ENCODE measurements at regions of chr16 and their contacts with region 1.

Region 1: GRCh38 chr16:3188925-3189825 is 1.2 kb downstream of the OR1F1 start:
- DNase-seq: peak; percentile 59 to 60
- H3K4me3 ChIP-seq: peak overlapping the region; percentile 94
- H3K27ac ChIP-seq: 0 out of 2 replicates have a peak overlapping the region, but pooled peaks have one; percentile 33
- H3K4me1 ChIP-seq: 0 out of 2 replicates have a peak, but pooled peaks cover 5% of the 10 kb centered on the region
- H3K27me3 ChIP-seq: no peaks in the 10 kb centered on the region
- CTCF ChIP-seq: no peak

Region 2: DNA sequence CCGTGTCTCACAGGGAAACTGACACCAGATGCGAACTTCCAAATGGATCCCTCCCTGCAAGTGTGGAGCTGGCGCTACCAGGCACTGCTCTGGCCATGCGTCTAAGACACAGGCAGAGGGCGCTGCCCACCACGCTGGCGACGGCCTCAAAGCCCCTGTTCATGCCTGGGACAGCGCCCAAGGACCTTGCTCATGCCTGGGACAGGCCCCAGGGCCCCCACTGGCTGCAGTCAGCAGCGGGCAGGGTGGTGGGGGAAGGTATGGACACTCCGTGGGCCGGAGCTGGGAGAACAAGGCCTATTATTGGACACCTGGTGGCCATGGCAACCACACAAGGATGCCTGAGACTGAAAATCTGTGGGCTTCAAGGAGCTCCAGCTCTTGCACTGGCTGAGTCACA is 350.2 kb before region 1 on chr16:
- CTCF ChIA-PET with region 1: no interaction called
- POLR2A ChIA-PET with region 1: no interaction called
- intact Hi-C with region 1: no loop called
- DNase-seq: no peak
- H3K4me3 ChIP-seq: no peak overlapping the region
- H3K27ac ChIP-seq: no peak overlapping the region
- H3K4me1 ChIP-seq: peaks cover 32% of the 10 kb centered on the region
- H3K27me3 ChIP-seq: no peaks in the 10 kb centered on the region
- CTCF ChIP-seq: 0 out of 2 replicates have a peak, but pooled peaks have one; percentile 52

Region 3: GRCh38 chr16:3150346-3151218 is 38.6 kb before region 1 on chr16:
- CTCF ChIA-PET with region 1: no interaction called
- POLR2A ChIA-PET with region 1: interaction called, 8 read pairs
- intact Hi-C with region 1: loop called (anchors 1 kb)
- DNase-seq: peak; percentile 91 to 99
- H3K4me3 ChIP-seq: peak overlapping the region; percentile 99
- H3K27ac ChIP-seq: peak overlapping the region; percentile 75
- H3K4me1 ChIP-seq: peaks cover 6% of the 10 kb centered on the region
- H3K27me3 ChIP-seq: no peaks in the 10 kb centered on the region
- CTCF ChIP-seq: no peak

Region 4: DNA sequence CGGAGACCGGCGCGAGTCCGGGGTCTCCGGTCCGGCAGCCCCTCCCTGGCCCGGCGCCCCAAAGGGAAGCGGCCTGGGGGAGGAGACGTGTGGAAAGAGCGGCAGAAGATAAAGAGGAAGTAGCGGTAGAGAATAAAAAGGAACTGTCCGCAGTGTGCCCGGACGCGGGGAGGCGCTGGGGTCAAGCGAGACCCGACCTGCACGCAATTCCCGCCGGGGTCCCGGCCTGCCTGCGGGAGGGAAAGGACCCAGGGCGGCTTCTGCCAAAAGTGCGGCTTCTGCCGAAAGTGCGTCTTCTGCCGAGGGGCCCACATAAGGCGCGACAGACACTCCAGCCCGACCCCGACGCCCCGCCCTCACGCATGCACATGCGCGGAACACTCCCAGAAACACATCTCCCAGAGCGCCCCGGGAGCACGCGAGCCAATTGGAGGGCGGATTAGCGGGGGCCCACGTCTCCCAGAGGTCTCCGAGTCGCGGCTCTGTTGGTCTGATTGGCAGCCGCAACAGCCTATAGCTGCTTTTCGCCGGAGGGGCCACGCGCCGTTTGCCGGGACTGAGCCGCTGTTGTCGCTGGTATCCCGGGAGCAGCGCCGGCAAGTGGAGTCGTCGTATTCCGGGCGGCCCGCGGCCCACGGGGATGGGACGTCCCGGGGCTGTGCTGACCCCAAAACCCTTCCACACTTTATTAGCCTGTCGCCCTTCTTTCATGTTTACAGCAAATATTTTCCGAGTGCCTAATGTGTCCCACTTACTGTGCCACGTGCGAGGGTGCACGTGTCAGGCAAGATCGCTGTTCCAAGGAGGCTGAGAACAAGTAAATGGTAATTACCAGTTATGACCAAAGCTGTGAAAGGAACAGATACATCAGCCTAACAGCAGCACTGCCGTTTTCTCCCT is 75.2 kb after region 1 on chr16:
- CTCF ChIA-PET with region 1: interaction called, 3 read pairs
- POLR2A ChIA-PET with region 1: no interaction called
- intact Hi-C with region 1: loop called (anchors 5 kb)
- DNase-seq: peak; percentile 95 to 99
- H3K4me3 ChIP-seq: peak overlapping the region; percentile 84
- H3K27ac ChIP-seq: peak overlapping the region; percentile 75
- H3K4me1 ChIP-seq: no peaks in the 10 kb centered on the region; the same call in 1 of the 2 replicates
- H3K27me3 ChIP-seq: no peaks in the 10 kb centered on the region
- CTCF ChIP-seq: no peak

Region 5: GRCh38 chr16:4475880-4476788 is 1287.0 kb after region 1 on chr16 and contains the start of gene HMOX2:
- CTCF ChIA-PET with region 1: no interaction called
- POLR2A ChIA-PET with region 1: interaction called, 31 read pairs
- intact Hi-C with region 1: no loop called
- DNase-seq: peak; percentile 86 to 99
- H3K4me3 ChIP-seq: peak within 1 kb of the TSS; percentile 96
- H3K27ac ChIP-seq: peak within 1 kb of the TSS; percentile 71
- H3K4me1 ChIP-seq: peaks cover 27% of the 10 kb centered on the region
- H3K27me3 ChIP-seq: no peaks in the 10 kb centered on the region
- CTCF ChIP-seq: no peak; the same call in 1 of the 2 replicates
- total RNA-seq, gene HMOX2: 68.1 and 69.5 TPM in 2 replicates

Measured in PC-9 (cell line).